Tibial artery (tissue), 4 donors: ENCODE measurements at regions of chr9 and their contacts with region 1.

Region 1: DNA sequence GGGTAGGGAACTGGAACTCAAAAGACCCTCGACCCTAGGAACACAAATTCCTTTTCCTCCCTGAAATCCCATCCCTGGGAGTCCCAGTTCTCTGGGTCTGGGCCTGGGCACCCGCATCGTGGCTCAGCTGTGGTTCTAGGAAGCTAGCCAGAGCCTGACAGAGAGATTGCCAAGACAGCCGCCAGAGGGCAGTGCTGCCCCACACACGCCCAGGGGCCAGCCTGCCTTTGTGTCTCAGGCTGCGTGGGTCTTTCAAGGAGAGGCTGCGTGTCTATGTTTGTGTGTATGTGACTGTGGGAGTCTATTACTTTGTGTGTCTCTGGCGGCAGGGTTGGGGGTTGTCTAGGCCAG is 32.0 kb upstream of the TTLL11 start:
- DNase-seq: peak; percentile 68 to 84
- H3K4me3 ChIP-seq: no peak overlapping the region
- H3K27ac ChIP-seq: no peak overlapping the region
- H3K4me1 ChIP-seq: peaks cover 0 to 27% (median 17%) of the 10 kb centered on the region in 4 donors
- H3K27me3 ChIP-seq: peaks cover 3 to 40% of the 10 kb centered on the region in 2 donors
- CTCF ChIP-seq: peak; percentile 94 to 95

Region 2: GRCh38 chr9:122347363-122348287 is 222.5 kb after region 1 on chr9:
- intact Hi-C with region 1: loop called (anchors 2 kb)
- DNase-seq: peak in 1 of 2 donors; percentile 15
- H3K4me3 ChIP-seq: peak overlapping the region; percentile 49 to 71
- H3K27ac ChIP-seq: peak overlapping the region in 1 of 2 donors; percentile 33
- H3K4me1 ChIP-seq: peaks cover 0 to 15% (median 6%) of the 10 kb centered on the region in 4 donors
- H3K27me3 ChIP-seq: peaks cover 0 to 12% of the 10 kb centered on the region in 2 donors
- CTCF ChIP-seq: no peak

Region 3: GRCh38 chr9:122453677-122454135 is 328.6 kb after region 1 on chr9:
- intact Hi-C with region 1: loop called (anchors 10 kb)
- DNase-seq: no peak
- H3K4me3 ChIP-seq: no peak overlapping the region
- H3K27ac ChIP-seq: no peak overlapping the region
- H3K4me1 ChIP-seq: no peaks in the 10 kb centered on the region
- H3K27me3 ChIP-seq: no peaks in the 10 kb centered on the region
- CTCF ChIP-seq: no peak